ENCODE measurements at regions of chr10 and their contacts with region 1.

Region 1: GRCh38 chr10:68526626-68527307 is 556 bp downstream of the SLC25A16 start:
- DNase-seq: no peak
- H3K4me3 Mint-ChIP-seq: peak overlapping the region; percentile 97
- H3K27ac Mint-ChIP-seq: peak overlapping the region; percentile 87
- H3K4me1 Mint-ChIP-seq: peaks cover 6% of the 10 kb centered on the region
- H3K27me3 Mint-ChIP-seq: no peaks in the 10 kb centered on the region

Region 2: DNA sequence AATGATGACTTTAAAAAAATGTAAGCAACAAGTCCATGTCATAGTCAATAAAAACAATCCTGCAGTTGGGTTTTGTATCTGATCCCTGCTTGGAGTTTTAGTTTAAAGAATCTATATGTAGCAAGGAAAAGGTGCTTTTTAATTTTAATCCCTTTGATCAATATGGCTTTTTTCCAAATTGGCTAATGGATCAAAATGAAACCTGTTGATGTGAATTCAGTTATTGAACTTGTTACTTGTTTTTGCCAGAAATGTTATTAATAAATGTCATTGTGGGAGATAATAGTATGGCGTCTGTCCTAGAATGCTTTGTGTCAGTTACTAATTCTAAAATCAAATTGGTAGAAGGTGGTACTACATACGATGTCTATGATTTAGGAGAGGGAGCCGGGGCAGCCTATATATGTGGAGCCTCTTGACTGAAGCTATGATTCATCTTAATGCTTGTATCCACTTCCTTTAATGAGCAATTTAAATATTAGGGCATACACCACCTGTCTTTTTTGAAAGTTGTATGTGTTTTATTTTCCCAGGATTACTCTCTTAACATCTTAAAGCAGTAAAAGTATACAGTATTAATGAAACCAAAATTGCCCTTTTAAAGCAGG is 183.8 kb before region 1 on chr10:
- intact Hi-C with region 1: no loop called
- DNase-seq: no peak
- H3K4me3 Mint-ChIP-seq: no peak overlapping the region
- H3K27ac Mint-ChIP-seq: peak overlapping the region; percentile 2
- H3K4me1 Mint-ChIP-seq: peaks cover 28% of the 10 kb centered on the region
- H3K27me3 Mint-ChIP-seq: no peaks in the 10 kb centered on the region

Region 3: DNA sequence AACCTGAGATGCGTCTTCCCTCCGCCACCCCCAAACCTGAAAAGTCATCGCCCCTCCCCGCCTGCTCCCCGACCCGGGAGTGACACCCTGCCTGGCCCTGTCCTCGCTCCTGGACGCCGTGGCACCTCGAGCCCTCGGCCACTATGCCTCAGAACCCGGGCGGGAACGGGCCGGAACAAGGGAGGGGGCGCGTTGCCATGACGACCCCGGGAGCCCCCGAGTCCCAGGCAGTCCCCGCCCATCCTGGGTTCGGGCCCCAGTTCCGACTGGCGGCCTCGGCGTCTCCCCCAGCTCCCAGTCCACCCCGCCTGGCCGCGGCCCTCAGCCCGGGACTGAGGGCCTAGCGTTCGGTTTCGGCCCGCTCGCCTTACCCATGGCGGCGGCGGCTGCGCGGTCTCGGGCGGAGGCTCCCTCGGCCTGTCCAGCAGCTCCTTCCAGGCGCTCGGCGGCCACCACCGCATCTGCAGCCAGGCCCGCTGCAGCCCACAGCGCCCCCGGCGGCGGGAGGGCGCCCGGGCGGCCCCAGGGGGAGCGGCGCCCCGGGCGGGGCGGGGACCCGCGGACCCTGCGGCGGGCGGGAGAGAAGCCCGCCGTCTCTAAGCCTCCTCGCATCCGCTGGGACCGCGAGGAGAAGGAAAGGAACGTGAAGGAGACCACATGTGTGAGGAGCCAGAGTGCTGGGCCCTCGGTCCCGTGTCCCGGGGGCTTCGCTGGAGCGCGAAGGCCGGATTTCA is 119.8 kb before region 1 on chr10 and contains the start of gene RUFY2:
- intact Hi-C with region 1: loop called (anchors 1 kb)
- DNase-seq: peak; percentile 95
- H3K4me3 Mint-ChIP-seq: peak within 1 kb of the TSS; percentile 93
- H3K27ac Mint-ChIP-seq: peak within 1 kb of the TSS; percentile 88
- H3K4me1 Mint-ChIP-seq: peaks cover 19% of the 10 kb centered on the region
- H3K27me3 Mint-ChIP-seq: no peaks in the 10 kb centered on the region
- total RNA-seq, gene RUFY2: 9.5 and 10.3 TPM in 2 replicates

Region 4: DNA sequence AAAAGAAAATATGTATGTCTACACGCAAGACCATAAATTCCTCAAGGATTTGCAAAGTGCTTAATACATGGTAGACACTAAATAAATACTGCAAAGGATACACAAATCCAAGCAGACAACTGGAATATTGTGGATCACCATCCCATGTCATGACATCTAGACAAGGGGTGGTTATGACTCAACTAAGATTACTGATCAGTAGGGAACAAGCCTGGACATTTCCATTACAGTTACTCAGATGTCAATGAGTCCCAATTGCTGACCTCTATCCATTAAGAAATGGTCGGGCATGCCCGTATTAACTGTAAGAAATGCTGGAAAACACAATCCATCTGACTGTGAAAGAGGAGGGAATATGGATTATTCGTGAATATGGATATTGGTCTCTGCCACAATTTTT is 92.1 kb before region 1 on chr10:
- intact Hi-C with region 1: no loop called
- DNase-seq: no peak
- H3K4me3 Mint-ChIP-seq: no peak overlapping the region
- H3K27ac Mint-ChIP-seq: no peak overlapping the region
- H3K4me1 Mint-ChIP-seq: peaks cover 7% of the 10 kb centered on the region
- H3K27me3 Mint-ChIP-seq: no peaks in the 10 kb centered on the region

Region 5: DNA sequence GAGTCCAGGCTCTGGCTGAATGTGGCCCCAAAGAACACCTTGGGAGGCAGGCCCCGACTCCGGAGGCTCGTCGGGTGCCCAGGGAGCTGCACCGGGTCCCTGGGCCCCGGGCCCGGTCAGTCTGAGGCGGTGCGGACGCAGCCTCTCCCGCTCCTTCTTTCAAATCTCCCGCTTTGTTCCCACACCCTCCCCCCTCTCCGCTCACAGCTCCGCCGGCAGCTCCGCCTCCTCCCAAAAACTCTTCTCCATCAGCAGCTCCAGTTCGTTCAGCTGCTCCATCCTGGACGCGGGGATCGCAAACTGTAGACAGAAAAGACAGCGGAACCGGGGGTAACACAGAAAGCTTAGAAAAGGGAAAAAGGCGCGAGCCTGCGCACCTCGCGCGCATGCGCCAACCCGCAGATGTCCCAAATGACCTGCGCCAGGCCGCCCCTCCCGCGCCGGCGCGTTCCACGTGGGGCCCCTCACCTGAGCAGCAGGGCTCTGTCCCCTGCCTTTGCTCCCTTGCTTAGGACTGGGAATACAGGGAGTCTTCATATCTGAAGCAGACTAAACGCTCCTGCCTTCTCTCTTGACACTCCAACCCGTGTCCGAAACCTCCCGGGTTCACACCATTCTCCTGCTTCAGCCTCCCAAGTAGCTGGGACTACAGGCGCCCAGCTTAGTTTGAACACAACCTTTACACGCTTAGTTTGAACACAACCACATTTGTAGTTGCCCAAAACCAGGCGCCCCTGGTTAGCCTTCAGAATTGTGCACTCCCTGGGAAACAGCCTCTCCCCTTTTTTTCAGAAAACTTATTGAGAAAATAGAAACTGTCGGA is 55.0 kb before region 1 on chr10 and contains the start of gene DNA2:
- intact Hi-C with region 1: loop called (anchors 1 kb)
- DNase-seq: peak; percentile 94
- H3K4me3 Mint-ChIP-seq: peak within 1 kb of the TSS; percentile 97
- H3K27ac Mint-ChIP-seq: peak within 1 kb of the TSS; percentile 99
- H3K4me1 Mint-ChIP-seq: peaks cover 21% of the 10 kb centered on the region
- H3K27me3 Mint-ChIP-seq: no peaks in the 10 kb centered on the region
- total RNA-seq, gene DNA2: 58.0 and 59.1 TPM in 2 replicates

Measured in activated CD4-positive, alpha-beta T cell treated with anti-CD3 and anti-CD28 coated beads, Interleukin-2, amount 10 ng/mL, durations not matched to agents 24 days and 14 days (primary cell).